Spleen (tissue), 13 donors: ENCODE measurements at regions of chr16 and their contacts with region 1.

Region 1: DNA sequence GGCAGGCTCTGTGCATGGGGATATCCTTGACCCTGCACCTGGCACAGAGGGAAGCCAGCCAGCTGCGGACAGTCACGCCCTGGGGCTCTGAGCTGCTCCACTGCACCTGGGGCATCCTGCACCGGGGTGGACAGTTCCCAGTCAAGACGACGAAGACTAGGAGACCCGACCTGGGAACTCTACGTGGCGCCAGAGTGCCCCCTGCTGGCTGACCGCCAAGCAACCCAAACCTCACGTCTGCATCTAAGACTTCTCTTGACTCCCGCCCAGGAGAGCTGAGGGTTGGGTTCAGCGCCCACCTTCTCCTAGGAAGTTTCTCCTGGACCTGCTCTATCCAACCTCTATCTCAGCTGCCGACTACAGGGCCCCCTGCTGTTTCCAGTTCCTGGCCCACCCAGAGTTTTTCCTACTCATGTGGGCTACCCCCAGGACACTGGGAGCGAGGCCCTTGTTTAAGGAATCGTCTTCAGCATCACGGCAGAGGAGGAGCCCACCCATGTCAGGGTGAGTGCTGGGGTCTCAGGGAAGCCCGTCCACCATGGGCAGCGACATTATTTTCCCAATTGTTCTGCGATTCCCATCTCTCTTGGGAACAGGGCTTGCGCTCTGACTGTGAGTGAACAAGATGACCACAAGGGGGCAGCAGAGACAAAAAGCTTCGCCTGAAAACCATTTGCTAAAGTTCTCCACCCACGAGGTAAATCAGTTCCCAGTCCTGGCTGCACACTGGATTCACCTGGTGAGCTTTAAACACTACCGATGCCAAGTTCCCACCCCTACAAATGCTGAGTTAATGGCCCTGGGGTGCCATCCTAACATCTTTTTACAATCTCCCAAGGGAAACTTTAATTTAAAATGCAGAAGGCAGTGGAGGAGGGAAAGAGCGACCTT is 29.3 kb downstream of the TLE7 start:
- DNase-seq: no peak
- H3K4me3 ChIP-seq: peak overlapping the region in 1 of 8 donors; percentile 14
- H3K27ac ChIP-seq: no peak overlapping the region
- H3K4me1 ChIP-seq: peaks cover 0 to 15% (median 8%) of the 10 kb centered on the region in 6 donors
- H3K27me3 ChIP-seq: peaks cover 0 to 56% (median 7%) of the 10 kb centered on the region in 7 donors
- CTCF ChIP-seq: peak; percentile 65 to 93 (median 86)
- POLR2A ChIP-seq: no peak

Region 2: DNA sequence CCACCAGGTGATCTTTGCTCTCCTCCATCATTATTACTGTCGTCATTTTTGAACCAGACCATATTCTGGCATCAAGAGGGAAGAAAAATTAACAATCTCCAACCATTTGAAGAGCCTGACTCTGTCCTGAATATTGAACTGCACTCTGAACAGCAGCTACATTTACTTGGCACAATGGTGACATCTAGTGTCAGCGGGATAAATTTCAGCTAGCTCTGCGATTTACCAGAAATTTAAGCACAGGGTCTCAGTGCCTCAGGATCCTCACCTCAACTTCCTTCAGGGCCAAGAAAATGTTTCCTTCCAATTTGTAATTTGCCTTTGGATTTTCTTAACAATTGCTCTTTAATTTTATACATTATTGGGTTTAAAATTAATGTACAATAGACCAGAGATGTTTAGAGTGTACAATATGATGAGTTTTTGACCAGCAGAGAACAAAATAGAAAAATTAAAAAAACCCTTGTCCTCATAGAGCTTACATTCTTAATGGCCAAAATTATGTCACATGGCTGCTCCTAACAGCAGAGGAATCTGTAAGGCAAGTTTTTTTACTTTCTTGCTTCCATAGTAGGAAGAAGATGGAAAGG is 87.4 kb after region 1 on chr16:
- intact Hi-C with region 1: loop called (anchors 2 kb)
- DNase-seq: no peak
- H3K4me3 ChIP-seq: no peak overlapping the region
- H3K27ac ChIP-seq: no peak overlapping the region
- H3K4me1 ChIP-seq: no peaks in the 10 kb centered on the region
- H3K27me3 ChIP-seq: peaks cover 0 to 9% (median 0%) of the 10 kb centered on the region in 7 donors
- CTCF ChIP-seq: peak; percentile 48 to 74 (median 61)
- POLR2A ChIP-seq: no peak

Region 3: DNA sequence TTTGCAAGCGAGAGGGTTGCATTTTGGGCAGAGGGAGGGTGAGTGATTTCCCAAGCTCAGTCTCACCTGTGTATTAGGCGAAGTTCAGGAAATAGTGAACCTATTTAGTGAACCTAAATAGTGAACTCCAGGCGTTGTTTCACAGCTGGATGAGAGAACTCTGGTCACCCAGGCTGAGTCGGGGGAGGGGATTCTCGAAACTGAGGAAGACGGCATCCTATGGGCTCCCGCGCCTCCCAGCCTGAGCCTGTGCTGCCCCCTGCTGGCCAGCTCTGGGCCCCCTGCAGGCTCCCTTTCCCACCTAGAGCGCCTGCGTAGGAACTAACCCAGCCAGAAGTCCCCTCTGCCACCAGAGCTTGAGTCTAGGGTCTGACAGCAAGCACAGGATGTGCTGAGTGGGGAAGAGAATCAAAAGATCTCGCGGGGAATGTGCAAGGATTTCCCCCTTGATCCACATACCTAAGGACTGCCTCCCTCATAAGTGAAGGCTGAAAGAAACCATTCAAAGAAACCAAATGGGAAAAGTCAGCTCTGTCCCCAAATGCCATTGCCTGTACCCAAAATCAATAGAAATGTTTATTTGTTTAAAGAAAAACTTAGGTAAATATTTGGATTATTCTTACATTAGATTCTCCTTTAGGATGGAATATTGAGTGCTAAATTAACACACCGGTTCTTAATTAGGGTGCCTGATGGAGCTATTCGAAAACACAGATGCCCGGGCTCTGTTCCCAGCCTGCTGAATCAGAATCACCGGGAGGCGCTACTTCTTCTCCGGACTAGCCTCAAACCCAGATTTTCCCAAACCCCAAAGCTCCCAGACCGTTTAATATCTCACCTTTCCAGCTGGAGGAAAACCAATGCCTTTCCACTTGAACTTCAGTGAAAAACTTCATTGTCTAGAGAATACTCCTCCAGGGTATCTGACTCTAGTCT is 198.7 kb after region 1 on chr16:
- intact Hi-C with region 1: loop called (anchors 5 kb)
- DNase-seq: peak; percentile 92
- H3K4me3 ChIP-seq: peak overlapping the region in 1 of 8 donors; percentile 48
- H3K27ac ChIP-seq: no peak overlapping the region
- H3K4me1 ChIP-seq: peaks cover 0 to 9% (median 4%) of the 10 kb centered on the region in 6 donors
- H3K27me3 ChIP-seq: peaks cover 0 to 41% (median 0%) of the 10 kb centered on the region in 7 donors
- CTCF ChIP-seq: peak; percentile 68 to 96 (median 92)
- POLR2A ChIP-seq: no peak

Region 4: GRCh38 chr16:71645453-71645852 is 232.9 kb after region 1 on chr16:
- intact Hi-C with region 1: no loop called
- DNase-seq: no peak
- H3K4me3 ChIP-seq: no peak overlapping the region
- H3K27ac ChIP-seq: no peak overlapping the region
- H3K4me1 ChIP-seq: no peaks in the 10 kb centered on the region
- H3K27me3 ChIP-seq: no peaks in the 10 kb centered on the region
- CTCF ChIP-seq: peak in 3 of 11 experiments; percentile 20 to 35 (median 26)
- POLR2A ChIP-seq: no peak